ENCODE measurements at regions of chr5 and their contacts with region 1.

Region 1: DNA sequence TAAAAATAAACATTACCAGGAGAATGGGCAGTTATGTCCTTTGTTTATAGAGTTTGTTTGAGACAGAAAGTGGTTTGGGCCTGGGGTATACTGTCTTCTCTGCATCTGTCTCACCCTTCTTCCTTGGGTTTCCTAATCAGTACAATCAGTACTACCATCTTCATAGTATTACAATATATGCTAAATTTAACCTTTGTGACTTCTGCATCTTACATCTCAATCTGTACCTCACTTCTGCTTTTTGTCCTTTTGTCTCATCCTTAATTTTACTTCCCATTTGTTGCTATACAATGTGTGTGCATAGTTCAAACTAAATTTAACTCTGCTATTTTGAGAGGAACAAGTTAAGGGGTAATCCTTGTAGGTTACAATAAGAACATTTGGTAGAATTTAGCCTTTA is 19.6 kb downstream of the FBXO38 start:
- DNase-seq: no peak
- H3K4me3 Mint-ChIP-seq: no peak overlapping the region
- H3K27ac Mint-ChIP-seq: peak overlapping the region; percentile 23
- H3K4me1 Mint-ChIP-seq: peaks cover 34% of the 10 kb centered on the region
- H3K27me3 Mint-ChIP-seq: no peaks in the 10 kb centered on the region

Region 2: DNA sequence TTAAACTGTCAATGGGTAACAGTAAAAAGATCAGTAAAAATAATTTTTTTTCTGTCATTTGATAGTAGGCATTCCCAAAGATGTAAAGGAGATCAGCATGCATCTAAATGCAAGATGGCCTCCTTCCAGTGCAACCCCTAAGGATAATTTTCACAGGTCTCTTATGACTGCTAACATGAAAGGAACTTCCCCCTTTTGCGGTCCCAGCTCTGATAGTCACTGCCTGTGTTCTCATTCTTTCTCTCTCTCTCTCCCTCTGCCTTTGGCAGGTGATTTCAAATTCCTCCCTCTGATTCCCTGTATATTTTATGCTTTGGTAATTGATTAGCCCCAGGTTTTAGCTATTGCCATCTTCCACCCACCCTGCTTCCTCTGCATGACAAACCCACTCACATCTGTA is 226.1 kb before region 1 on chr5:
- intact Hi-C with region 1: no loop called
- DNase-seq: no peak
- H3K4me3 Mint-ChIP-seq: no peak overlapping the region
- H3K27ac Mint-ChIP-seq: no peak overlapping the region
- H3K4me1 Mint-ChIP-seq: no peaks in the 10 kb centered on the region
- H3K27me3 Mint-ChIP-seq: peaks cover 10% of the 10 kb centered on the region

Region 3: DNA sequence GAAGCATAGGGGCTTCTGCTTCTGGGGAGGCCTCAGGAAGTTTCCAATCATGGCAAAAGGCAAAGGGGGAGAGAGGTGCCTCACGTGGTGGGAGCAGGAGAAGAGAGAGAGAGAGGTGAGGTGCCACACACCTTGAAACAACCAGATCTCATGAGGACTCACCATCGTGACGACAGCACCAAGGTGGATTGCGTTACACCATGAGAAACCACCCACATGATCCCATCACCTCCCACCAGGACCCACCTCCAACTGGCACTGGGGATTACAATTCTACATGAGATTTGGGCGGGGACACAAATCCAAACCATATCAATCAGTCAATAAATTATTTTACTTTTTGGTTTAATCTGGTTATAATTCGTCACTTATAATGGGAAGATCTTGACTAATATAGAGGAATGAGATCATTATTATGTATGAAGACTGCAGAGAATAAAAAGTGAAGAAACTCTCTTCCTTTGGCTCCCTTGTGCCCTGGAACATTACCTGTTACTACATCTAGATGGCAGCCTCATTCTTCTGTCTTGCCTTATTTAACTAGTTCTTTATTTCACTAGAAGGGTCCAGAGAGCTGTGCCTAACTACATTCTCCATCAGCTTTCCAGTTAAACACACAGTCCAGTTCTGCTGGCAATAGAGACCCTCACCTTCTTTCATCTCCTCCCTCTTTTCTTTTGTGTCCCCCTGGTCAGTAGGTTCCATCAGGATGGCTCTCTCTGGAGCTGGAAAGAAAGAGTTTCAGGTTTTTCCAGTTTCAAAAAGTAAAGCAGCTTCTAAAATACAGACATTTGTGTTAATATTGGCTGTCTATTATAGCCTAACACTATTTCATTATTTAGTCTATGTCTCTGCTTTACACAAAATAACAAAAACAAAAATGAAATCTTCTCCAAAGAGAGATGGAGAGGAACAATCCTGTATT is 112.8 kb before region 1 on chr5:
- intact Hi-C with region 1: no loop called
- DNase-seq: no peak
- H3K4me3 Mint-ChIP-seq: no peak overlapping the region
- H3K27ac Mint-ChIP-seq: no peak overlapping the region
- H3K4me1 Mint-ChIP-seq: no peaks in the 10 kb centered on the region
- H3K27me3 Mint-ChIP-seq: no peaks in the 10 kb centered on the region

Region 4: DNA sequence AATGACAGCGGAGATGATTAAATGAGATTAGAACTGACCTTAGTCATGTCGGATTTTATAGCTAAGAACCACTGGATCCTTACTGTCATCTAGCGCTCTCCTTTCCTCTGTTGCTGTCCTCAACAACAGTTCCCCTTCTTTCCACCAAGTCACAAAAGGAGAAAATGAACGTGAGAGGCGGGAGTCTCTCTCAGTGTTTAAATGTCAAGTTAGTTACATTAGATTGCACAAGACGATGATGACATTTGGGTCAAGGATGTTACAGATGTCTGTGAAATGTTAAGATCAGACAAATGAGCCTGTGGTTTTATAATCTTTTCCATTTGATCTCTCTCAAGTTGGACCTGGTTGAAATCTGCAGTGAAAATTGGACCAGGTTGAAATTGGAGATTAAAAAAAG is 33.9 kb after region 1 on chr5:
- intact Hi-C with region 1: loop called (anchors 5 kb)
- DNase-seq: no peak
- H3K4me3 Mint-ChIP-seq: no peak overlapping the region
- H3K27ac Mint-ChIP-seq: peak overlapping the region; percentile 66
- H3K4me1 Mint-ChIP-seq: peaks cover 6% of the 10 kb centered on the region
- H3K27me3 Mint-ChIP-seq: no peaks in the 10 kb centered on the region

Region 5: GRCh38 chr5:148748702-148749392 is 345.5 kb after region 1 on chr5:
- intact Hi-C with region 1: no loop called
- DNase-seq: no peak
- H3K4me3 Mint-ChIP-seq: no peak overlapping the region
- H3K27ac Mint-ChIP-seq: no peak overlapping the region
- H3K4me1 Mint-ChIP-seq: no peaks in the 10 kb centered on the region
- H3K27me3 Mint-ChIP-seq: peaks cover 9% of the 10 kb centered on the region

Measured in activated T-helper 1 cell treated with anti-CD3 and anti-CD28 coated beads, Interleukin-12 subunit alpha, Interleukin-12 subunit beta, Interleukin-2, Interleukin-4 antibody, amounts not matched to agents 30 ng/mL and 10 ng/mL and 1 ng/mL, durations not matched to agents 14 hours and 24 hours and 36 hours (primary cell).